H1 (cell line): ENCODE measurements at regions of chr7 and their contacts with region 1.

Region 1: GRCh38 chr7:32347244-32347828 is 142.8 kb downstream of the LSM5 start:
- DNase-seq: peak in 1 of 2 experiments; percentile 64
- H3K4me3 ChIP-seq: no peak overlapping the region
- H3K27ac ChIP-seq: no peak overlapping the region
- H3K4me1 ChIP-seq: no peaks in the 10 kb centered on the region
- H3K27me3 ChIP-seq: no peaks in the 10 kb centered on the region
- CTCF ChIP-seq: peak in 2 of 3 experiments; percentile 48 to 61; a peak in 3 of 4 replicates
- EP300 ChIP-seq: no peak
- POLR2A ChIP-seq: no peak
- RAD21 ChIP-seq: peak; percentile 61

Region 2: DNA sequence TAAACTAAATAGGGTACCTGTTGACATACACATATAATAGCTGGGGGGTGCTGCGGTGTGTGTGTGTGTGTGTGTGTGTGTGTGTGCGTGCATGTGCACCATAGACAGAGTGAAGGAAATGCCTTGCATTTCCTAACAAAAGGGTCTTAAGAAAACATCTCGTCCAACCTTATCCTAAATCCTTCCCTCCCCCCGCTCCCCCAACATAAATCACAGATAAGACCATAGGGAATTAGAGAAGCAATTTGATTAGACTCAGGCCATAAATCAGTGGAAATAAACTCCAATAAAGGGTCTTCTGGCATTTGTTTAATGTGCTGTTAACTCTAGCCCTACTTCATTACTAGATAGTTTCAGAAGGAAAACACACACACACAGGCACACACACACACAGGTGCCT is 511.9 kb before region 1 on chr7:
- CTCF ChIA-PET with region 1: no interaction called
- POLR2A ChIA-PET with region 1: no interaction called
- DNase-seq: no peak
- H3K4me3 ChIP-seq: no peak overlapping the region
- H3K27ac ChIP-seq: no peak overlapping the region
- H3K4me1 ChIP-seq: no peaks in the 10 kb centered on the region
- H3K27me3 ChIP-seq: no peaks in the 10 kb centered on the region
- CTCF ChIP-seq: no peak
- EP300 ChIP-seq: no peak
- POLR2A ChIP-seq: no peak
- RAD21 ChIP-seq: no peak

Region 3: DNA sequence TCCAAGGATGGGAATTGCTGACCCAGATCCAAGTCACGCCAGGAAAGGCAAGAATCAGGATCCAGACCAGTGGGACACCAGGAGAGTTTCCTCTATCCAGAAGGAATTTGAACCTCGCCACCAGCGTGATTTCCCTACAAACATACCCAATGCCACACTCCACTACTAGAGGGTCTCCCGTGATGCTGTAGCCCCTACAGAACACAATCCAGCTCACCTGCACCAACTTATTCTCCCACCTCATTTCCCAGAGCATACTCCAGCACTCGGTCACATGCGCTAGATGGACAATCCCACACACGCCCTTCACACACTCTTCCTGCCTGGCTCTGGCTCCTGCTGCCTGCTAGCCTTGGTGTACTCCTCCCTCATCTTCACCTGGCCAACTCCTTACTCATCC is 135.0 kb before region 1 on chr7:
- CTCF ChIA-PET with region 1: interaction called, 28 read pairs
- POLR2A ChIA-PET with region 1: no interaction called
- DNase-seq: peak in 1 of 2 experiments; percentile 20
- H3K4me3 ChIP-seq: no peak overlapping the region
- H3K27ac ChIP-seq: no peak overlapping the region
- H3K4me1 ChIP-seq: no peaks in the 10 kb centered on the region
- H3K27me3 ChIP-seq: no peaks in the 10 kb centered on the region; a peak in 1 of 7 replicates
- CTCF ChIP-seq: no peak
- EP300 ChIP-seq: no peak
- POLR2A ChIP-seq: no peak
- RAD21 ChIP-seq: no peak

Region 4: GRCh38 chr7:32335107-32335506 is 12.2 kb before region 1 on chr7:
- CTCF ChIA-PET with region 1: interaction called, 17 read pairs
- POLR2A ChIA-PET with region 1: no interaction called
- DNase-seq: no peak
- H3K4me3 ChIP-seq: no peak overlapping the region
- H3K27ac ChIP-seq: no peak overlapping the region
- H3K4me1 ChIP-seq: no peaks in the 10 kb centered on the region
- H3K27me3 ChIP-seq: no peaks in the 10 kb centered on the region
- CTCF ChIP-seq: no peak
- EP300 ChIP-seq: no peak
- POLR2A ChIP-seq: no peak
- RAD21 ChIP-seq: no peak

Region 5: GRCh38 chr7:32357535-32358277 is 10.4 kb after region 1 on chr7:
- CTCF ChIA-PET with region 1: interaction called, 11 read pairs
- POLR2A ChIA-PET with region 1: no interaction called
- DNase-seq: no peak
- H3K4me3 ChIP-seq: no peak overlapping the region
- H3K27ac ChIP-seq: no peak overlapping the region
- H3K4me1 ChIP-seq: no peaks in the 10 kb centered on the region
- H3K27me3 ChIP-seq: no peaks in the 10 kb centered on the region; a peak in 1 of 7 replicates
- CTCF ChIP-seq: peak in 2 of 3 experiments; percentile 66 to 72; a peak in 3 of 4 replicates
- EP300 ChIP-seq: no peak
- POLR2A ChIP-seq: no peak
- RAD21 ChIP-seq: peak; percentile 82 to 88